ENCODE measurements at regions of chr2 and their contacts with region 1.

Region 1: DNA sequence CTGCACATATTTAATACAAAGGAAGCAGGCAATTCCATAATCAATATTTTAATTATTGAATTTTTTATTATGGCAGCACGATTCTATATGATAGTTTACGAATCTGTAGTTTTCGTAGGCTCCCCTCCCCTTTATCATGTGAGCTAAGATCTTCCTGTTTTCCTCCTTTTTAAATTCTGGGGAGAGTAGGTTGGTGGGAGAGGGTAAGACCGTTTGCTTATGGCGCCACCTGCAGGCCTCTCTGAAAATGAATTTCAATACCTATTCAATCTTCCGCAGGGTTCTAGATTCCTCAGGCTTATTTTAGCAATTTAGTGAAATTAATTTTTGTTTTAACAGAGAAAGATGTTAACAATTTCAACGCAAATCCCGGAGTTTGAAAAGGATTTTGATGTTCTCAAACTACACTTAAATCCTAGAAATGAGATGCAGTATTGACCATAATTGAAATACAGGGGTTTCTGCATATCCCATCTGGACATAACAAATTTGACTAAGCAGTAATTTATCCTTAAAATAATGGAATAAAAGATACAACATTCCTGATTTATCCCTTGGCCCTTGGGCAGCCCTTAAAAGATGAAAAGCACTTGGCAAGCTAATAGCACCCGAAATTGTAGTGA is 12.8 kb upstream of the GBX2 start:
- DNase-seq: peak; percentile 73
- H3K4me3 Mint-ChIP-seq: peak overlapping the region; percentile 86
- H3K27ac Mint-ChIP-seq: peak overlapping the region; percentile 37
- H3K4me1 Mint-ChIP-seq: peaks cover 24% of the 10 kb centered on the region
- H3K27me3 Mint-ChIP-seq: no peaks in the 10 kb centered on the region
- CTCF ChIP-seq: peak; percentile 84

Region 2: GRCh38 chr2:235766278-235766677 is 414.7 kb before region 1 on chr2:
- CTCF ChIA-PET with region 1: interaction called, 5 read pairs
- intact Hi-C with region 1: loop called (anchors 5 kb)
- DNase-seq: peak; percentile 58
- H3K4me3 Mint-ChIP-seq: no peak overlapping the region
- H3K27ac Mint-ChIP-seq: peak overlapping the region; percentile 19
- H3K4me1 Mint-ChIP-seq: peaks cover 8% of the 10 kb centered on the region
- H3K27me3 Mint-ChIP-seq: no peaks in the 10 kb centered on the region
- CTCF ChIP-seq: peak; percentile 90

Region 3: DNA sequence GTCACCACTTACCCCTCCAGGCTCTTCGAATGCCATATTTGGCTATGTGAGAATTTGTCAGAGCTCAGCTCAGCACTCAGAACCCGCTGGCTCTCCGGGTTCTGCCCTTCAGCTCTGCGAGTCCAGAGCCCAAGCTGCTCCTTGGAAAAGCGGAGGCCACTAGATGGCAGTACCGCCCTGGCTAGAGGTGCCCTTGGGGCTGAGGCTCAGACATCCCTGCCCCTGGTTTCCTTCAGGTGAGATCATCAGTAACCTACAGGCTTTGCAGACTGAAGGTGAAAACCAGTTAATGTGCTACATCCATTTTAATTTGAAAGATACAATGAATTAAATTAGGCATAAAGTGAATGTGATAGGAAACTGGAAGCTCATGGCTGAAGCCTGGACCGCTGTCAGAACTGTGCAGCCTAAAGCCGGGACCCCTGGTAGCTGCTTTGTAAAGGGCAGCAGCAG is 401.5 kb before region 1 on chr2:
- CTCF ChIA-PET with region 1: interaction called, 13 read pairs
- intact Hi-C with region 1: loop called (anchors 1 kb)
- DNase-seq: peak; percentile 87
- H3K4me3 Mint-ChIP-seq: no peak overlapping the region
- H3K27ac Mint-ChIP-seq: no peak overlapping the region
- H3K4me1 Mint-ChIP-seq: no peaks in the 10 kb centered on the region
- H3K27me3 Mint-ChIP-seq: no peaks in the 10 kb centered on the region
- CTCF ChIP-seq: peak; percentile 80

Region 4: GRCh38 chr2:235945608-235946140 is 235.3 kb before region 1 on chr2:
- CTCF ChIA-PET with region 1: no interaction called
- intact Hi-C with region 1: loop called (anchors 5 kb)
- DNase-seq: no peak
- H3K4me3 Mint-ChIP-seq: no peak overlapping the region
- H3K27ac Mint-ChIP-seq: no peak overlapping the region
- H3K4me1 Mint-ChIP-seq: no peaks in the 10 kb centered on the region
- H3K27me3 Mint-ChIP-seq: no peaks in the 10 kb centered on the region
- CTCF ChIP-seq: no peak

Measured in Calu3 (cell line).